CD8-positive, alpha-beta T cell (primary cell): ENCODE measurements at regions of chr17 and their contacts with region 1.

Region 1: GRCh38 chr17:82909322-82909904 is 69.6 kb upstream of the ZNF750 start:
- DNase-seq: peak; percentile 32 to 92 (median 69)
- ATAC-seq: peak; percentile 77
- H3K4me3 ChIP-seq: no peak overlapping the region
- H3K4me3 Mint-ChIP-seq: peak overlapping the region; percentile 42
- H3K27ac ChIP-seq: peak overlapping the region in 1 of 2 experiments; percentile 16
- H3K27ac Mint-ChIP-seq: peak overlapping the region; percentile 96
- H3K4me1 ChIP-seq: peaks cover 26% of the 10 kb centered on the region
- H3K4me1 Mint-ChIP-seq: peaks cover 27% of the 10 kb centered on the region
- H3K27me3 ChIP-seq: no peaks in the 10 kb centered on the region
- H3K27me3 Mint-ChIP-seq: no peaks in the 10 kb centered on the region
- CTCF ChIP-seq: no peak

Region 2: DNA sequence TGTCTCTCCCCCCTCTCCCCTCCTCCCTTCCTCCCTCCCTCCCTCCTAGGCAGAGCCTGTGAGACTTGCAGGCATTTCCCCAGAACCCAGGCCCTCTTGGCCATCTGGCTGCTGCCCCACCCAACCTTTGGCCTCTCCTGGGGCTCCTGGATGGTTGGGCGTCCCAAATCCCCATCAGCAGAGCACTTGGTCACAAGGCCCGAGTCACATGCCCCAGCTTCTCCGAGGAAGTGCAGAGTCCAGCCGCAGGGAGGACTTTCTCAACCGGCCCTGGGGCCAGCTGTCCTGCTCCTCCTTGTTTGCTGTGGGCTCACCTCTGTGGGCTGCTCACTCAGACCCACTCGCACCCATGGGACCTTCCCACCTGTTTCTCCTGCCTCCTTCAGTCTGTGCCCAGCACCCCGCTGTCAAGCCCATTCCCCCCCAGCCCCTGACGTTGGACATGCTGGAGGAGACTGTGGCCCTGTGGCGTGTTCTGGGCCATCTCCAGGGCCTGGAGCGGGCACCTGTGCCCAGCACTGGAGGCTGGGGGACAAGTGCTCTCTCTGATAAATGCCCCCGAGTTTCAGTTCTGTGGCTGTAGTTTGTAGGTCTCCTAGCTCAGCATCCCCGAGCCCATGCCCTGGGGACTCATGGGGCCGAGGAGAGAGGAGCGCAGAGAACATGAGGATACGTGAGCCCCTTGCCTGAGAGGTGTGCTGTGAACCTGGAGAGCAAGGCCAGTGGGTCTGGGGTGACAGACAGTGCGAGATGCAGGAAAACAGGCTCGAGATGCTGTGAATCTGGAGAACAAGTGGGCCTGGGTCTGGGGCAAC is 27.3 kb before region 1 on chr17:
- CTCF ChIA-PET with region 1: interaction called, 3 read pairs
- POLR2A ChIA-PET with region 1: interaction called, 16 read pairs
- intact Hi-C with region 1: loop called in 1 of 2 experiments (anchors 2 kb)
- DNase-seq: no peak
- ATAC-seq: no peak
- H3K4me3 ChIP-seq: peak overlapping the region; percentile 14 to 70
- H3K4me3 Mint-ChIP-seq: peak overlapping the region; percentile 82
- H3K27ac ChIP-seq: peak overlapping the region; percentile 74
- H3K27ac Mint-ChIP-seq: peak overlapping the region; percentile 99
- H3K4me1 ChIP-seq: peaks cover 63% of the 10 kb centered on the region
- H3K4me1 Mint-ChIP-seq: peaks cover 71% of the 10 kb centered on the region
- H3K27me3 ChIP-seq: no peaks in the 10 kb centered on the region
- H3K27me3 Mint-ChIP-seq: no peaks in the 10 kb centered on the region
- CTCF ChIP-seq: no peak

Region 3: DNA sequence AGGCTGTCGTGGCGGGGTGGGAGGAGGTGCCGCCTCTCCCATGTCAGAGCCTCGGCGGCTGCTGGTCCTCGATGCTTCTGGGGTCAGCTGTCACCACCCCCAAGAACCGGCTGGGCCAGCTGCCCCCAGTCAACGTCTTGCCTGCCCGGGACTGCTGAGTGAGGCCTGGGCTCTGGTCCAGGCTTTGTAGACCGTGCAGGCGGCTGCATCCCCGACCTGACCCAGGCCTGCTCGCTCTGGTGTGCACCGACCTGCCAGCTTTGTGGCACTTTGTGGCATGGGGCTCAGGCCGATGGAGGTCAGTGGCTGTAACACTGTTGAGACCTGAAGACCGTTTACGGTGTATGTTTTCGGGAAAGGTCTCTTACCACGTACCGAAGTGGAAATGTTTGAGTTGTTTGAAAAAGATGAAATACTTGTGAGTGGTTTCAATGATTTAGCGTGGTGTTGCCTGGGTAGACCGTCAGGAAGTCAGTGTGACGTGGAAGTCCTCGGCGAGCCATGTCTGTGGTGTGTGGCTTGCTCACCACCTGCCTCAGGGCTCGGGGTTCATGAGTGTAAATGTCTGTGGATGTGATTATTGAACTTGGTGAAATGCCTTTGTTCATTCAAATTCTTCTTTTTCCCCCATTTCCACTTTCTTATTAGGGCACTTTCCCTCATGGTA is 16.4 kb before region 1 on chr17:
- CTCF ChIA-PET with region 1: no interaction called
- POLR2A ChIA-PET with region 1: interaction called, 8 read pairs
- intact Hi-C with region 1: loop called (anchors 1 to 2 kb)
- DNase-seq: peak; percentile 65 to 94 (median 83)
- ATAC-seq: peak; percentile 94
- H3K4me3 ChIP-seq: no peak overlapping the region
- H3K4me3 Mint-ChIP-seq: peak overlapping the region; percentile 71
- H3K27ac ChIP-seq: peak overlapping the region; percentile 42 to 58
- H3K27ac Mint-ChIP-seq: peak overlapping the region; percentile 96
- H3K4me1 ChIP-seq: peaks cover 22% of the 10 kb centered on the region
- H3K4me1 Mint-ChIP-seq: peaks cover 33% of the 10 kb centered on the region
- H3K27me3 ChIP-seq: no peaks in the 10 kb centered on the region
- H3K27me3 Mint-ChIP-seq: no peaks in the 10 kb centered on the region
- CTCF ChIP-seq: no peak